Activated T-helper 1 cell treated with anti-CD3 and anti-CD28 coated beads, Interleukin-12 subunit alpha, Interleukin-12 subunit beta, Interleukin-2, Interleukin-4 antibody, amounts not matched to agents 30 ng/mL and 10 ng/mL and 1 ng/mL, durations not matched to agents 14 hours and 24 hours and 36 hours (primary cell): ENCODE measurements at regions of chr3 and their contacts with region 1.

Region 1: GRCh38 chr3:58305882-58306711 is at the starts of genes HTD2 and RPP14:
- DNase-seq: peak; percentile 98
- H3K4me3 Mint-ChIP-seq: peak within 1 kb of the TSS; percentile 95
- H3K27ac Mint-ChIP-seq: peak within 1 kb of the TSS; percentile 99
- H3K4me1 Mint-ChIP-seq: peaks cover 27% of the 10 kb centered on the region
- H3K27me3 Mint-ChIP-seq: peaks cover 15% of the 10 kb centered on the region
- total RNA-seq, gene HTD2: 11.5 and 13.6 TPM in 2 replicates
- total RNA-seq, gene RPP14: 22.7 and 23.4 TPM in 2 replicates

Region 2: DNA sequence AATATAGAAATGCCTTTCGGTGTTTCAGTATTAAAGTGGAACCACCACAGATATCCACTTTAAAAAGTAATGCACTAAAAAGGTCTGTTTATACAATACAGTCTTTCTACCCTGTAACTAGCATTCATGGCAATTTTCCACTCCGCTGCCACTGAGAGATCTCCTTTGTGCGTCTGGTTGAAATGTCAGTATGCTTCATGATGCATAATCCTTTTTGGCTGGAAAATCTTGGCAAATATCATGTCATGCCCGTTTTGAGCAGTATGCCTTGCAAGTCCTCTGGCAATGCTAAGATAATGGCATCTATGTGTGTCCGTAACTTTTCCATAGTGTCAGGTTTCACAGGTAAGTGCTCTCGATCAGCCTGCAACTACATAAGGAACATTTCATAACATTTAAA is 678.1 kb before region 1 on chr3:
- intact Hi-C with region 1: no loop called
- DNase-seq: no peak
- H3K4me3 Mint-ChIP-seq: no peak overlapping the region
- H3K27ac Mint-ChIP-seq: no peak overlapping the region
- H3K4me1 Mint-ChIP-seq: no peaks in the 10 kb centered on the region
- H3K27me3 Mint-ChIP-seq: no peaks in the 10 kb centered on the region

Region 3: GRCh38 chr3:58008140-58009025 is 297.7 kb before region 1 on chr3 and contains the start of gene FLNB:
- intact Hi-C with region 1: loop called (anchors 2 kb)
- DNase-seq: peak; percentile 65
- H3K4me3 Mint-ChIP-seq: peak within 1 kb of the TSS; percentile 85
- H3K27ac Mint-ChIP-seq: peak within 1 kb of the TSS; percentile 70
- H3K4me1 Mint-ChIP-seq: peaks cover 39% of the 10 kb centered on the region
- H3K27me3 Mint-ChIP-seq: peaks cover 2% of the 10 kb centered on the region
- total RNA-seq, gene FLNB: 22.3 and 24.1 TPM in 2 replicates

Region 4: GRCh38 chr3:58324391-58325390 is 18.6 kb after region 1 on chr3:
- intact Hi-C with region 1: loop called (anchors 1 kb)
- DNase-seq: peak; percentile 6
- H3K4me3 Mint-ChIP-seq: peak overlapping the region; percentile 6
- H3K27ac Mint-ChIP-seq: peak overlapping the region; percentile 86
- H3K4me1 Mint-ChIP-seq: peaks cover 31% of the 10 kb centered on the region
- H3K27me3 Mint-ChIP-seq: no peaks in the 10 kb centered on the region

Region 5: DNA sequence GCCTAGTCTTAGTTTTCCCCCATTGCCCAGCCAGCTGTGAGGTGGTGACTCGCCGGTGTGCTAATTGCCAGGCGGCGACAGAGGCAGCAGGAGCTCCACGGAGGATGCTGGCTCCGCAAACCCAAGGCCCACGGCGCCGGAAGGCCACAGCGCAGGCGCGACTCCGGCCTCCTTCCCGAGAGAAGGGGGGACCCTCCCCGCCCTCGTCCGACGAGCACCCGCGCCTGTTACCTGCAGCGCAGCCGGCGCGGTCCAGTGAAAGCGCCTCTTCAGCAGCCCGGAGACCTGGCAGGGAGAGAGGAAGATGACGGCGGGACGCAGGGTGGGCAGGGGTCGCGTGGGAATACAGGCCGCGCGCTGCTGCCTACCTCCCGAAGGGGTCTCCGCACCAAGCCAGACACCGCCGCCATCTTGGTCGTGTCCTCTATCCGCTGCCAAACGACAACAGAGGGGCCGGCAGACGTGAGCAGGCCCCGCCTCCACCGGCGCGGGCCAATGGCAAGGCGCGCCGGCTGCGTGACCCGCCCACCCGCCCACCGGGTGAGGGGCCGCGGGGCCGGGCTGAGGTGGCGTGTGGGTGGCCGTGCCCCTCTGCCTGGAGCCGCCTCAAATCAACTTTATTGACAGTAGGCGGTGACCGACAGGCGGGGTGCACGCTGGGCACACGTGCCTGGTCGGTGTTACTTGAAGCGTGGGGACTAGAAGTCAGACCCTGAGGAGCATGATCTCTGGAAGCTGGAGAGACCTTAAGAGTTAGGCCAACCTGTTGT is 127.5 kb after region 1 on chr3 and contains the start of gene PDHB:
- intact Hi-C with region 1: loop called (anchors 1 kb)
- DNase-seq: peak; percentile 89
- H3K4me3 Mint-ChIP-seq: peak within 1 kb of the TSS; percentile 88
- H3K27ac Mint-ChIP-seq: peak within 1 kb of the TSS; percentile 91
- H3K4me1 Mint-ChIP-seq: peaks cover 29% of the 10 kb centered on the region
- H3K27me3 Mint-ChIP-seq: no peaks in the 10 kb centered on the region
- total RNA-seq, gene PDHB: 62.0 and 68.1 TPM in 2 replicates

Region 6: DNA sequence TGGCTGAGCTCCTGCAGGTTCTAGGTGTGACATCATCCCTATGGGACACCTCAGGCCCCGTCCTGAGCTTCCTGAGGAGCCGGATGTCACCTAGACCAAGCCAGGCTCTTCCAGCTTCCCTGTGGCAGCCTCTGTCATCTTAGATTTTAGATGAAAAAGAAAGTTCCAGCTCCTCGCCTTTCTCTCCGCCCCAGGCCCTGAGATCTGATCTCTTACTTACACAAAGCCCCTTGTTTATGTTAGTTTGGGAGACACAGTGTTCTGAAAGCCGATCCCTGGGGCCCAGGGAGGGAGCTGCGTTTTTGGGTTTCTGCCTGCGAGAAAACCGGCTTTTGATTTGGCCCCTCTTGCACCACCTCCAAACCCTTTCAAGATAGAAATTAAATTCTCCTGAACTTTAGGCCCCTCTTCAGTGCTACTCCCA is 311.3 kb after region 1 on chr3:
- intact Hi-C with region 1: no loop called
- DNase-seq: no peak
- H3K4me3 Mint-ChIP-seq: no peak overlapping the region
- H3K27ac Mint-ChIP-seq: no peak overlapping the region
- H3K4me1 Mint-ChIP-seq: no peaks in the 10 kb centered on the region
- H3K27me3 Mint-ChIP-seq: peaks cover 1% of the 10 kb centered on the region

Region 7: DNA sequence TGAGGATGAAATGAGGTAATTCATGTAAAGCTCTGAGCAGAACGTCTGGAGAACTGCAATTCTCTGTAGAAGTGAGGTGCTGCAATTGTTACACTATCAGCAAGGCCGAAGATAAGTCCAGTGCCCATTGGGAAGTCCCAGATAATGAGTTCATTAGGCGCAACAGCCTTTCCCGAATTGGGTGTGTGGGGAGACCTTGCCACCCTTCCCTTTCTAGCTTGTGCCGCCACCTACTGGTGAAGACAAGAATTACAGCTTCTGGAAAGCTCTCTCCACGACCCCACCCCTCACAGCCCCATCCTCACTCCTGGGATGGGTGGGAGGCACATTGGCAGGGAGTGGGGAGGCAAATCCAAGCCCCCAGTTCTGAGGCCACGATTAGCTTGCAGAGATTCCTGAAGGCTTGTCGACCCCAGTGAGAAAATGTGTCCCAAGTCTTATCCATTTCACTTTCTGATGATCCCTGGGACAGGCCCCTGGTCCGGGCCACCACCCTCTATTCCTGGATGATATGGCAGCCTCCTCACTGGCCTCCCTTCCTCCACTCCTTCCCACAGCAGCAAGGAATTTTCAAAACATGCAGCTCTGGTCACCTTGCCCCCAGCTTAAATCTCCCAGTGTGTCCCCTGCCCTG is 324.1 kb after region 1 on chr3:
- intact Hi-C with region 1: loop called (anchors 1 kb)
- DNase-seq: peak; percentile 46
- H3K4me3 Mint-ChIP-seq: no peak overlapping the region
- H3K27ac Mint-ChIP-seq: no peak overlapping the region
- H3K4me1 Mint-ChIP-seq: no peaks in the 10 kb centered on the region
- H3K27me3 Mint-ChIP-seq: no peaks in the 10 kb centered on the region

Region 8: GRCh38 chr3:60250206-60250605 is 1944.1 kb after region 1 on chr3:
- intact Hi-C with region 1: no loop called
- DNase-seq: no peak
- H3K4me3 Mint-ChIP-seq: no peak overlapping the region
- H3K27ac Mint-ChIP-seq: no peak overlapping the region
- H3K4me1 Mint-ChIP-seq: no peaks in the 10 kb centered on the region
- H3K27me3 Mint-ChIP-seq: peaks cover 2% of the 10 kb centered on the region